Activated CD4-positive, alpha-beta T cell treated with anti-CD3 and anti-CD28 coated beads, Interleukin-2, amount 10 ng/mL, durations not matched to agents 24 days and 14 days (primary cell): ENCODE measurements at regions of chr2 and their contacts with region 1.

Region 1: DNA sequence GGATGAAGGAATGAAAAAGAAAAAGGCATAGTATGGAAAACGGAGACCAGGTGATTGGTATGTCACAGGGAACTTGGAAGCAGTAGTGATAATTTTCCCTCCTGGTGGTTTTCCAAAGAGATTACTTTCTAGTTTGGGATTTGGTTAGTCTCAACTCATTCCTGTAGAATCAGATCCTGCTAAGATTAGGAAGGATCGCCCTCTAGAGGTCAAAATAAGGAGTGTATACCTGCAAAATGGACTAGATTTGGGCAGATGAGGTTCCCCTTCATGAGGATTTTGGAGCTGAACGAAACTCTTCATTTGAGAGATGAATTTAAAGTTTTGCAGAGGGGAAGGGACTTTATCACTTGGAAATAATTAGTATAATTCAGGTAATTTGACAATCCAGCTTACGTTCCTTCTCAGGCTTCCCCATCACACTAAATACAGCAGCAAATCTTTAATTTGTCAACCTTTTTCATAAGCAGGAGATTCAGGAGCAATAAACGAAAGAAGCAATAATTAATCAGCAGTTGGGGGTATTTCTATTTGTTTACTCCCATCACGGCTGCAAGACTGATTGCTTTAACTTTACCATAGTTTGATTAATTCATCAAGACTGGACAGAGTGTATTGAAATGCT is 65.2 kb downstream of the CCDC195 start:
- DNase-seq: peak; percentile 77
- H3K4me3 Mint-ChIP-seq: no peak overlapping the region
- H3K27ac Mint-ChIP-seq: no peak overlapping the region
- H3K4me1 Mint-ChIP-seq: no peaks in the 10 kb centered on the region
- H3K27me3 Mint-ChIP-seq: peaks cover 3% of the 10 kb centered on the region

Region 2: DNA sequence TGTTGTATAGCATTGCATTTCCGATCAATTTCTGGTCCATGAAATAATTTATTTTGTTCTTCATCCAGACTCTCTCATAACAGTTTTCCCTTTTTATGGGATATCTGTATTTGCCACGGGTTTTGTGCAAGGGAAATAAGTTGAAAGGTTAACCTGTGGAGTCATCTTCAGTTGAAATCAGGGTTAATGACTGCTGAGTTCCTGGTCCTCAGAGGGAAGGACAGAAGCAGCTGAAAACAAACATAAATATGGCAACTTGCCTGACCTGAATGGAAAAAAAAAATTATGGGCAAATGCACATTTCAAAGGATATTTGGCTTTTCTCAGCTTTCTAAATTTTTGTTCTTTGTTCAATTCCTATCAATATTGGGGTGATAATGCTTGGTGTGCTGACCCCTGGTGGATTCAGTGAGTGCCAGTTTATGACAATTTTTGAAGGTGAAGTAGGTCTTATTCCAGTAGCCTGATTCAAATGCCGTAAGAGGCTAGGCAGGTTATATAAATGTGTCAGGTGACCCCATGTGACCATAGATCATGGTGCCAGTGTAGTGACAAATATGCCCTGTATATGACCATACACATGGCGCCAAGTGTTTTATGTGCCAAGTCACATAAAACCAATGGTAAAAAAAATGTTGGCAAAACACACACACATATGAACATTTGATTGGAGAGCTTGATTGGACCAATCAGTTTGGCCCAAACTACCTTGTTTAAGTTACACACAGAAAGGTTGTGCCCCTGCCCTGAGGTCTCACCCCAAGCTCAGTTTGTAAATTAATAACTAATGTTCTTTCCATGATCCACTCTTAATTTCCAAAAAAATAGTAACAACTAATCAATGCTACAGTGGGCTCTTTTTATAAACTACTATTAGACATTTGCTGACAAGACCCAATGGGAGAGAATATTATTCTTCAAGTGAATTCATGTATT is 201.4 kb before region 1 on chr2:
- intact Hi-C with region 1: loop called (anchors 10 kb)
- DNase-seq: peak; percentile 66
- H3K4me3 Mint-ChIP-seq: no peak overlapping the region
- H3K27ac Mint-ChIP-seq: no peak overlapping the region
- H3K4me1 Mint-ChIP-seq: no peaks in the 10 kb centered on the region
- H3K27me3 Mint-ChIP-seq: peaks cover 21% of the 10 kb centered on the region